ENCODE measurements at regions of chr7 and their contacts with region 1.

Region 1: GRCh38 chr7:503575-504111 is 16.0 kb downstream of the PDGFA start:
- DNase-seq: peak; percentile 98 to 99
- H3K4me3 ChIP-seq: no peak overlapping the region
- H3K4me3 Mint-ChIP-seq: peak overlapping the region; percentile 72
- H3K27ac Mint-ChIP-seq: peak overlapping the region; percentile 100
- H3K4me1 ChIP-seq: peaks cover 40% of the 10 kb centered on the region
- H3K4me1 Mint-ChIP-seq: peaks cover 27% of the 10 kb centered on the region
- H3K27me3 ChIP-seq: no peaks in the 10 kb centered on the region
- H3K27me3 Mint-ChIP-seq: no peaks in the 10 kb centered on the region
- CTCF ChIP-seq: no peak

Region 2: DNA sequence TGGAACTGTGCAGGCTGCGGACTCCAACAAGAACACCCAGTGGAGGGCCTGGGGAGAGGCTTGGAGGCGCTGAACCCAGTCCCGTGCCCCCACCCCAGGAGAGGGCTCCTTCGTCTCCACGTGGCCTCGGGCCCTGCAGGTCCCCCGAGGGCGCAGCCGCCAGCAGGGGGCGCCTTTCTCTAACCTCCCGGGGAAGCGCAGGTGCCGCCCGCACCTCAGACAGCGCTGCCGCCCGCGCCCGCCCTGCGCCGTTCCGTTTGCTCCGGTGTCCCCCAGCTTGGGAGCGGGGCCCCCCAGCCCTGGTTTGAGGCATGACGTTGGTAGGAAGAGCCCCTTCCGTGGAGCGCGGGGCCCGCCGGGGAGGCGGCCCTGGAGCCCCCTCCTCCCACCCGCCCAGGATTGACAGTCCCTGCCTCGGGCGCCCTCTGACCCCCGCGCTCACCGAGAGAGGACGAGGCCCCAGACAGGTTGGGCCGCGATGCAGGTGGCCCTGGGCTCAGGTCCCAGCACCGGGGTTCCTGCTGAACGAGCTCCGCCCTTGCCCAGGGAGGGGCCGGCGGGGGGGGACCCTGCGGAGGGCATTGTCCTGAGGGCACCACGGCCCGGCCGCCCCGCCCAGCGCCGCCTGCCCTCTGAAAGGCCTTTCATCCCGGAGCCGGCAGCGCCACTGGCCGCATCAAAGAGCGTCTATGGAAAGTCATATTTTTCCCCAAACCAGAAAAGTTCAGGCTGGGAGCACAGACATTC is 170.8 kb before region 1 on chr7:
- CTCF ChIA-PET with region 1: interaction called, 19 read pairs
- POLR2A ChIA-PET with region 1: interaction called, 21 read pairs
- intact Hi-C with region 1: loop called (anchors 1 kb)
- DNase-seq: peak; percentile 88 to 96
- H3K4me3 ChIP-seq: peak overlapping the region; percentile 46
- H3K4me3 Mint-ChIP-seq: peak overlapping the region; percentile 67
- H3K27ac Mint-ChIP-seq: peak overlapping the region; percentile 72
- H3K4me1 ChIP-seq: peaks cover 30% of the 10 kb centered on the region
- H3K4me1 Mint-ChIP-seq: peaks cover 35% of the 10 kb centered on the region
- H3K27me3 ChIP-seq: no peaks in the 10 kb centered on the region
- H3K27me3 Mint-ChIP-seq: no peaks in the 10 kb centered on the region
- CTCF ChIP-seq: peak; percentile 94 to 95

Region 3: GRCh38 chr7:371119-371778 is 132.4 kb before region 1 on chr7:
- CTCF ChIA-PET with region 1: no interaction called
- POLR2A ChIA-PET with region 1: interaction called, 3 read pairs
- intact Hi-C with region 1: loop called (anchors 1 kb)
- DNase-seq: peak; percentile 59 to 84
- H3K4me3 ChIP-seq: no peak overlapping the region
- H3K4me3 Mint-ChIP-seq: peak overlapping the region; percentile 16
- H3K27ac Mint-ChIP-seq: peak overlapping the region; percentile 99
- H3K4me1 ChIP-seq: peaks cover 72% of the 10 kb centered on the region
- H3K4me1 Mint-ChIP-seq: peaks cover 43% of the 10 kb centered on the region
- H3K27me3 ChIP-seq: no peaks in the 10 kb centered on the region
- H3K27me3 Mint-ChIP-seq: no peaks in the 10 kb centered on the region
- CTCF ChIP-seq: no peak

Region 4: DNA sequence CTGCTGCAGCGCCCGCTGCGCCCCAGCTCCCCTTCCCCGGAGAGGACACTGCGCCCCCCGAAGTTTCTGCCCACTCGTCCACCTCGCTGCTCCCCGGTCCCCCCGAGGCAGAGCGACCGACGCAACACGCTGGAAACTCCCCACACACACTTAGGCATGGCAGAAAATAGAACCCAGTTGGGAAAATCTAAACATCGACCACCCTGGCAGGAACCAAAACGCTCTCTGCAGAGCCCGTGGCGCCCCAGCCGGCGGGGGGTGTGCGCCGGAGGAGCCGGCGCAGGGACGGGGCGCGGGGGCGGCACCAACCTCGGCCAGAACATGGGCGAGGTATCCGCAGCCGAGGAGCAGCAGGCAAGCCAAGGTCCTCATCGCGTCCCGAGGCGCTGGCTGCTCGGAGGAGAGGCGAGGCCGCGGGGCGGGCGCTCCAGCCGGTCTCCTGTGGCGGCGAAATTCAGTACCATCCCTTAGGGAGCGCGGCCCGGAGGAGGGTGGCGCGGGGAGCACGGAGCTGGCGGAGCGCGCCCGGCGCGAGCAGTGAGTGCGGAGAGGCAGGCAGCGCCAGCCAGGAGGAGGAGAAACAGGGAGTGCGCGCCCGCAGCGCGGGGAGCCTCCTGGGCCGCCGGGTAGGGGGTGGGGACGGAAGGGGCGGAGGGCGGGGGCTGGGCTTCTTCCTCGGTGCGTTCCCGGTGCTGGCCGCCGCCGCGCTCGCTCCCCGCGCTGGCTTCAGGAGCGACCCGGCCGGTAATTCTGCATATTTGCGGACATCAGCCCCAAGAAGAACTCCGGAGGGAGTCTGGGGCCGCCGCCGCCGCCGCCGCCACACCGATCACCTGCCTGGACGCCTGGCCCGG is 15.2 kb after region 1 on chr7:
- CTCF ChIA-PET with region 1: interaction called, 4 read pairs
- POLR2A ChIA-PET with region 1: interaction called, 9 read pairs
- intact Hi-C with region 1: loop called (anchors 2 kb)
- DNase-seq: peak; percentile 88
- H3K4me3 ChIP-seq: peak overlapping the region; percentile 98
- H3K4me3 Mint-ChIP-seq: peak overlapping the region; percentile 89
- H3K27ac Mint-ChIP-seq: peak overlapping the region; percentile 89
- H3K4me1 ChIP-seq: peaks cover 37% of the 10 kb centered on the region
- H3K4me1 Mint-ChIP-seq: peaks cover 6% of the 10 kb centered on the region
- H3K27me3 ChIP-seq: peaks cover 1% of the 10 kb centered on the region; the same call in 1 of the 2 replicates
- H3K27me3 Mint-ChIP-seq: no peaks in the 10 kb centered on the region
- CTCF ChIP-seq: no peak

Measured in Caco-2 (cell line).